ENCODE measurements at regions of chr4 and their contacts with region 1.

Region 1: GRCh38 chr4:183355405-183355804 is 33.2 kb upstream of the CLDN24 start:
- DNase-seq: peak; percentile 69
- H3K4me3 ChIP-seq: no peak overlapping the region
- CTCF ChIP-seq: no peak

Region 2: GRCh38 chr4:182354867-182355266 is 1000.5 kb before region 1 on chr4:
- in situ Hi-C with region 1: no loop called
- DNase-seq: peak; percentile 85
- H3K4me3 ChIP-seq: no peak overlapping the region
- CTCF ChIP-seq: no peak

Region 3: GRCh38 chr4:183321079-183321478 is 34.3 kb before region 1 on chr4:
- in situ Hi-C with region 1: loop called (anchors 5 kb)
- DNase-seq: peak; percentile 18
- H3K4me3 ChIP-seq: no peak overlapping the region
- CTCF ChIP-seq: no peak

Region 4: DNA sequence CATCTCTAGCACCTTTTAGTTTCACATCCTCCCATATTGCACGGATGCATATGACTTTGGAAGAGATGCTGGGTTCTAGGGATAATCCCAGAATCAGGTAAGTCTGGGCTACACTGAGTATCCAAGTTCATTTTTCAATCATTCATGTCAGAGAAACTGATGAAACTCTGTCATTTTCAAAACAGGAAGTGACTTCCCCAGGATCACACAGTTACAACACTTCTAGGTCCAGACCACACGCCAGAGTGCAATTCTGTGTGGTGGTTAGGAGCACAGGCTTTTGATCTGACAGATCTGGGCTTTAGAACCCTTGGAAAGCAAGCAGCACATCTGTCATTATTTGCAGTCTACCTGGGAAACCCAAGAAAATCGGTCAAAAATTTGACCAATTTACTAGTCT is 37.0 kb after region 1 on chr4:
- in situ Hi-C with region 1: no loop called
- DNase-seq: no peak
- H3K4me3 ChIP-seq: no peak overlapping the region
- CTCF ChIP-seq: no peak